ENCODE measurements at regions of chr9 and their contacts with region 1.

Region 1: GRCh38 chr9:24504521-24504920 is 41.2 kb downstream of the IZUMO3 start:
- DNase-seq: no peak
- ATAC-seq: no peak
- H3K4me3 ChIP-seq: no peak overlapping the region
- H3K27ac ChIP-seq: no peak overlapping the region
- H3K4me1 ChIP-seq: no peaks in the 10 kb centered on the region
- H3K27me3 ChIP-seq: no peaks in the 10 kb centered on the region
- CTCF ChIP-seq: no peak
- POLR2A ChIP-seq: no peak
- RAD21 ChIP-seq: no peak

Region 2: GRCh38 chr9:24516463-24516862 is 11.9 kb after region 1 on chr9:
- CTCF ChIA-PET with region 1: interaction called, 10 read pairs
- POLR2A ChIA-PET with region 1: no interaction called
- dilution Hi-C with region 1: no loop called
- in situ Hi-C with region 1: no loop called
- intact Hi-C with region 1: no loop called
- DNase-seq: no peak
- ATAC-seq: no peak
- H3K4me3 ChIP-seq: no peak overlapping the region
- H3K27ac ChIP-seq: no peak overlapping the region
- H3K4me1 ChIP-seq: no peaks in the 10 kb centered on the region
- H3K27me3 ChIP-seq: no peaks in the 10 kb centered on the region
- CTCF ChIP-seq: no peak
- POLR2A ChIP-seq: no peak
- RAD21 ChIP-seq: no peak